ENCODE measurements at regions of chr13 and their contacts with region 1.

Region 1: DNA sequence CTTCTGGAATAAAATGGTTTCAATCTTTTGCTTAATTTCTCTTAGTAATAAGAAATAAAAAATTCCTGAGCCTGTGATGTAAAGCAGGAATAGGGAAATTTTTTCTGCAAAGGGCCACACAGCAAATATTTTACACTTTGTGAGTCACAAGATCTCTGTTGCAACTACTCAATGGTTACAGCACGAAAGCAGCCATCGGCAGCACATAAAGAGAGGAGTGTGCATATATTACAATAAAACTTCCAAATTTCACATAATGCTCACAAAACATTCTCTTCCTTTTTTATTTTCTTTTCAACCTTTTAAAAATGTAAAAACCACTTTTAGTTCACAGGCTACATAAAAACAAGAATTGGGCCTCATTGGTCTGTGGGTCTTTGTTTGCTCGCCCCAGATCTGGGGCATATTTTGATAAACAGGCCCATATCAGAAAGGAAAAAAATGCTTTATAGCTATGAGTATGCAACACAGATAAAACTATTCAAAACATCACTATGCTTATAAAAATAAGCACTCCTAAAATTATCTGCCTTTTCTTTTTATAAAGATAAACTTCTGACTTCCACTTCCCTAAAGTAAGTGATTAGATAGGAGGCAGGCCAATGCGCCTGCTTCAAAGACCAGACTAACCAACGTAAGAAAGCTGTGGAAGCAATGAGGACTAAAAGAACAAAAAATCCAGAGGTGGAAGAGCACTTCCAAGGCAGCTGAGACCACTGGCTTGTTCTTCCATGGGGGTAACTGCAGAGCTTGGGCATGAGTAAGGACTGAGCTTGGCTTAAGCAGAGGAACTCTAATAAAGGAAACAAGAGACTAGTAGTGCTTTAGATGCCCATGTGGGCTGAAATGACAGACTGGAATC is 26.5 kb downstream of the MYCBP2 start:
- DNase-seq: no peak
- ATAC-seq: peak; percentile 41
- H3K4me3 ChIP-seq: no peak overlapping the region
- H3K4me3 Mint-ChIP-seq: peak overlapping the region in 7 of 10 donors; percentile 14 to 63 (median 29)
- H3K27ac ChIP-seq: no peak overlapping the region
- H3K27ac Mint-ChIP-seq: peak overlapping the region in 6 of 9 donors; percentile 7 to 80 (median 30)
- H3K4me1 ChIP-seq: peaks cover 4 to 6% of the 10 kb centered on the region in 2 donors
- H3K4me1 Mint-ChIP-seq: peaks cover 34 to 88% (median 75%) of the 10 kb centered on the region in 7 donors
- H3K27me3 ChIP-seq: no peaks in the 10 kb centered on the region
- H3K27me3 Mint-ChIP-seq: no peaks in the 10 kb centered on the region

Region 2: DNA sequence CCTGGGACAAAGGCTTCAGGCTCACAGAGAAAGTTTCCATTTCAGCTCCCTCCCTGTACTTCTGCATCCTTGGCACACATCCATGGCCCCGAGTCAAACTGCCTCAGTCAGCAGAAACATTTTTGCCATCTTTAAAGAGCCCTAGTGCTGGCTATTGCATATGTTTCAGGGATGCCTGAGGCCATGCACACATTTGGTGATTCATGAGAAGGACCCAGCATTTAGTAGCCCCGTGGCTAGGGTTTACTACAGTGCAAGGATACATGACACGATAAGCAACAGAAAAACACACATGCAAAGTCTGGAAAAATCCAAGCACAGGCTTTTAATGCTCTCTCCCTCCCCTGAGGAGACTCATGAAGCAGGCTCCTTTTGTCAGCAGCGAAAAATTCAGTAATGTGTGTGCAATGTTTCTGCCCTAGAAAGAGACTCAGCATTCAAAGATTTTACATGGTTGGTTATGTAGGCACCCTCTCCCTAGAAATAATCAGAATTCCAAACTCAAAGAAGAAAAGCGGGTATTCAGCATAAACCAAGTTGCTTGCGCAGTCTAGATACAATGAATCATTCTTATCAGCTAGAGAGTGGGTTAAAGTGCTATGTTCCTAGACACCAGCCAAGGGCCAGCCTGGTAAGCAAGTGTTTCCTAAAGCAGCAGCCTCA is 334.5 kb before region 1 on chr13:
- CTCF ChIA-PET with region 1: no interaction called
- POLR2A ChIA-PET with region 1: no interaction called
- intact Hi-C with region 1: no loop called
- DNase-seq: no peak
- ATAC-seq: no peak
- H3K4me3 ChIP-seq: no peak overlapping the region
- H3K4me3 Mint-ChIP-seq: no peak overlapping the region
- H3K27ac ChIP-seq: no peak overlapping the region
- H3K27ac Mint-ChIP-seq: no peak overlapping the region
- H3K4me1 ChIP-seq: no peaks in the 10 kb centered on the region
- H3K4me1 Mint-ChIP-seq: no peaks in the 10 kb centered on the region
- H3K27me3 ChIP-seq: no peaks in the 10 kb centered on the region
- H3K27me3 Mint-ChIP-seq: peaks cover 0 to 21% (median 9%) of the 10 kb centered on the region in 5 donors

Region 3: DNA sequence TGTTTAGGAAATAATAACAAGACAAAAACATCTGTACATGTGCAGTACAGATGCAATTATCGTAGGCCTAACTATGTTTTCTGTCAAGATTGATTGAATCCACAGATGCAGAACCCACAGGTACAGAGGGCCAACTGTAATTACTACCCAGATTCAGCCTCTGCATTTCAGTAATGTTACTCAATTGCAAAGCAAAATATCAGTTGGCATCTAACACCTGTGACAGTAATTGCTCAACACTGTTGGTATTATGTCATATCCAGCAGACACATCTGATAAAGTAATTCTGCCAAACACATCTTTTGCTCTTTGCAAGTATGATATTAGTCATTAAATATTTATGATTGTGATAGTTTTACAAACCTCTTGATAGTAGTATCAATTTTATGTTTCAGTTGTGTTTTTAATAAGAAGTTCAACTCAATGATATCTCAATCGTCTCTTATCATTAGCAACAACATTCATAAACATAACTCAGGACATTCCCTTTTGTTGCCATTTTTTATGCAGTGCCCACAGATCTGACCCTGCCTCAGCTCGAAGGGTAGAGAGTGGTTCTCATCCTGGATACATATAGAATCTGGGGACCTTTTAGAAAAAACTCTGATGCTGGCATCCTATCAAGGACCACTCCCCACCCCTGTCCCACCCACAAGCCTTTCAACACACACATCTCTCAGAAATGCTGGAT is 78.3 kb before region 1 on chr13:
- CTCF ChIA-PET with region 1: no interaction called
- POLR2A ChIA-PET with region 1: no interaction called
- intact Hi-C with region 1: no loop called
- DNase-seq: no peak
- ATAC-seq: no peak
- H3K4me3 ChIP-seq: no peak overlapping the region
- H3K4me3 Mint-ChIP-seq: no peak overlapping the region
- H3K27ac ChIP-seq: no peak overlapping the region
- H3K27ac Mint-ChIP-seq: peak overlapping the region in 3 of 9 donors; percentile 17 to 37 (median 23)
- H3K4me1 ChIP-seq: no peaks in the 10 kb centered on the region
- H3K4me1 Mint-ChIP-seq: peaks cover 7 to 33% (median 19%) of the 10 kb centered on the region in 7 donors
- H3K27me3 ChIP-seq: no peaks in the 10 kb centered on the region
- H3K27me3 Mint-ChIP-seq: no peaks in the 10 kb centered on the region

Region 4: GRCh38 chr13:77285098-77285497 is 15.3 kb before region 1 on chr13:
- CTCF ChIA-PET with region 1: no interaction called
- POLR2A ChIA-PET with region 1: no interaction called
- intact Hi-C with region 1: loop called in 1 of 2 experiments (anchors 2 kb)
- DNase-seq: no peak
- ATAC-seq: no peak
- H3K4me3 ChIP-seq: no peak overlapping the region
- H3K4me3 Mint-ChIP-seq: no peak overlapping the region
- H3K27ac ChIP-seq: no peak overlapping the region
- H3K27ac Mint-ChIP-seq: peak overlapping the region in 1 of 9 donors; percentile 35
- H3K4me1 ChIP-seq: no peaks in the 10 kb centered on the region
- H3K4me1 Mint-ChIP-seq: peaks cover 6 to 49% (median 30%) of the 10 kb centered on the region in 7 donors
- H3K27me3 ChIP-seq: no peaks in the 10 kb centered on the region
- H3K27me3 Mint-ChIP-seq: no peaks in the 10 kb centered on the region

Region 5: GRCh38 chr13:77310579-77311279 is 10.3 kb after region 1 on chr13:
- CTCF ChIA-PET with region 1: no interaction called
- POLR2A ChIA-PET with region 1: no interaction called
- intact Hi-C with region 1: loop called in 1 of 2 experiments (anchors 1 kb)
- DNase-seq: no peak
- ATAC-seq: no peak
- H3K4me3 ChIP-seq: no peak overlapping the region
- H3K4me3 Mint-ChIP-seq: peak overlapping the region in 7 of 10 donors; percentile 41 to 69 (median 55)
- H3K27ac ChIP-seq: peak overlapping the region; percentile 16
- H3K27ac Mint-ChIP-seq: peak overlapping the region in 8 of 9 donors; percentile 4 to 82 (median 61)
- H3K4me1 ChIP-seq: peaks cover 41 to 63% of the 10 kb centered on the region in 2 donors
- H3K4me1 Mint-ChIP-seq: peaks cover 66 to 99% (median 93%) of the 10 kb centered on the region in 7 donors
- H3K27me3 ChIP-seq: no peaks in the 10 kb centered on the region
- H3K27me3 Mint-ChIP-seq: no peaks in the 10 kb centered on the region

Region 6: DNA sequence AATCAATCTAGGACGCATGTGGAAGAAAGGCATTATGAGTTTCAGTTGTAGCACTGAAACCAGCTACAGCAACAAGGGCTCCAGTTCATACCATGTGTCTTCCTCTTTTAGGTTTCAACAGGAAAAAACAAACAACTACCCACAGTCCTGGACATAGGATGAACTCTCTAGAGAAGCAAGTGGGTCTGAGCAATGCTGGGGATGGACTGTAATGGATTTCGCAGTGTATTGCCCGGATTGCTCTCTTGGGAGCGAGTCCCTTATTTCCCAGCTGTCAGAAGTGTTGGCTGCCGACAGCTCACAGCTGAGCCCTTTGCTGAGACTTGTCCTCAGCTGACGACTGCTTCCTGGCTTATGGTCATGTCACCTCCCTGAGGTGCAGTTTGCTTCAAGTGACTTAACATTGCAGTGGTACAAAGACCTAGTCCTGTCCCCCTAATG is 38.6 kb after region 1 on chr13:
- CTCF ChIA-PET with region 1: no interaction called
- POLR2A ChIA-PET with region 1: no interaction called
- intact Hi-C with region 1: no loop called
- DNase-seq: no peak
- ATAC-seq: peak; percentile 56
- H3K4me3 ChIP-seq: no peak overlapping the region
- H3K4me3 Mint-ChIP-seq: peak overlapping the region in 3 of 10 donors; percentile 23 to 49 (median 41)
- H3K27ac ChIP-seq: no peak overlapping the region
- H3K27ac Mint-ChIP-seq: peak overlapping the region in 5 of 9 donors; percentile 11 to 60 (median 45)
- H3K4me1 ChIP-seq: no peaks in the 10 kb centered on the region
- H3K4me1 Mint-ChIP-seq: peaks cover 6 to 40% (median 30%) of the 10 kb centered on the region in 7 donors
- H3K27me3 ChIP-seq: no peaks in the 10 kb centered on the region
- H3K27me3 Mint-ChIP-seq: peaks cover 0 to 4% (median 0%) of the 10 kb centered on the region in 5 donors

Measured in naive thymus-derived CD4-positive, alpha-beta T cell (primary cell).